ENCODE measurements at regions of chr15 and their contacts with region 1.

Region 1: DNA sequence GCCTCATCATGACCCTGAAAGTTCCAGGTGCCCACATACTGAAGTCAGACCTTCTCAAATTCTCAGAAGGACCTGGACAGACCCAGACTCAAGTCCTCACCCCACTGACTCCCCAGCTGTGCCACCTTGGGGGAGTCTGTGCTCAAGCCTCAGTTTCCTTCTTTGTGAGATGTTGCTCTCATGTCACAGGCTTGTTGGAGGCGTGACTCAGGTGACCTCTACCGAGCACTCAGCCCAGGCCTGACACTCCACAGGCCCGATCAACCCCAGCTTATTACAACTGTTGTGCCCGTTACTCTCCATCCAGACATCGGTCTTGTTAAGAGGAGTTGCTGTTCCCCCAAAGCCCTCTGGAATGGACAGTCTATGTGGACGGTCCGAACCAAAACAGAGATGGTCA is 276.1 kb upstream of the LYSMD4 start:
- DNase-seq: no peak
- H3K4me3 ChIP-seq: no peak overlapping the region
- H3K27ac ChIP-seq: no peak overlapping the region
- H3K4me1 ChIP-seq: no peaks in the 10 kb centered on the region
- H3K27me3 ChIP-seq: no peaks in the 10 kb centered on the region
- CTCF ChIP-seq: no peak

Region 2: GRCh38 chr15:99565299-99566156 is 443.8 kb before region 1 on chr15 and contains the start of gene MEF2A:
- CTCF ChIA-PET with region 1: no interaction called
- POLR2A ChIA-PET with region 1: no interaction called
- intact Hi-C with region 1: no loop called
- DNase-seq: peak; percentile 65 to 90
- H3K4me3 ChIP-seq: peak within 1 kb of the TSS; percentile 72
- H3K27ac ChIP-seq: peak within 1 kb of the TSS; percentile 72
- H3K4me1 ChIP-seq: peaks cover 22% of the 10 kb centered on the region
- H3K27me3 ChIP-seq: no peaks in the 10 kb centered on the region
- CTCF ChIP-seq: no peak
- total RNA-seq, gene MEF2A: 25.7 and 31.8 TPM in 2 replicates

Region 3: DNA sequence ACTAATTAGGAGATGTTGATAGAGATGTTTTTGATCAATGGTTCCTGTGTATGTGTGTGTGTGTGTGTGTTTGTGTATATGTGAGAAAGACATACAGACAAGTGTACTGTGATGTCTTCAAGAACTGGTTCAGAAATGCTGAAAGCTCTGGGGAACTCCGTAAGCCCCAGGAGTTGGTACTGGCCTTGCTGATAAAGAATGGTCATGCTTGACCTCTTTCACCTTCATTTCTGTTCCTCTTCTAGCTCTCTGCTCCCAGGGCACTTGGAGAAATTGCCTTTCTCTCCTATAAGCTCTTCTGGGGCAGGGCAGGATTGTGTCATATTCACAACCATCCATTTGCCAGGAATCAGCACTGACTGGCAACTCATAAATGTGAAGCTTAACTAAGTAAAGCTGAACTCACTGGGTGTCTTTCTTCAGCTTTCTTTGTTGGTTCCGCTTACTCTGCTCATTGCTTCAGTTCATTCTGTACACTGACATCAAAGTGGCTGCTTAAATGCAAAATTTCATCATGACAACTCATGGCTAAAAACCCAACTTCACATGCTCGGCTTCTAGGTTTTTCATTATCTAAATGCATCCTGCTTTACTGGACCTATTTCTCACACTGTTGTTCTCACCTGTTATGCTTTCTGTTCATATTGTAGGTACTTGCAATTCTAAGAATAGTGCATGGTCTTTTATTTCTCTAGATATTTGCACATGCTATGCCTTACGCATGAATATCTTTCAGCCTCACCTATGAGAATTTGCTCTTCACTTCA is 114.0 kb before region 1 on chr15:
- CTCF ChIA-PET with region 1: no interaction called
- POLR2A ChIA-PET with region 1: no interaction called
- intact Hi-C with region 1: no loop called
- DNase-seq: no peak
- H3K4me3 ChIP-seq: no peak overlapping the region
- H3K27ac ChIP-seq: no peak overlapping the region
- H3K4me1 ChIP-seq: no peaks in the 10 kb centered on the region
- H3K27me3 ChIP-seq: peaks cover 15% of the 10 kb centered on the region
- CTCF ChIP-seq: no peak

Region 4: DNA sequence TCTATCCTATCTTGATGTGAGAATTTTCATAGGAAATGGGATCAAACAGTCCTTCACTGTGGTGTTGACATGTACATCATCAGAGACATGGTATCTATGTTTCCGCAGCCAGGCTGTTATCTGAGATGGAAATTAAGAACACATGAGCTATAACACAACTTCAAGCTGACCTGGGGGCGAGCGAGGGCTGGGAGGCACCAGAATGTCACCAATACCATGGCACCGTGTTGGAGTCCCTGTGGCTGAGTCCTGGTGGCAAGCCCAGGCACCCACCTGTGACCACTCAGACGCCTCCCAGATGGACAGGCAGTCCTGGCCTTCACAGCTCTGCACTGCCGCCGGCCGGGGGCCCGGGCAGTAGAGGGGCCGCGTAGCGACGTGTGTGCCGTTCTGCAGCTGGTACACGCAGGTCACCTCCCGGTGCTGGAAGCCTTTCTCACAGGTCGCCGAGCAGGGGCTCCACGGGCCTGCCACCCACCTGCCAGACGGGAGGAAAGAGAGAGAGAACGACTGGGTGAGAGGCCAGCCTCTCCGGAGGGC is 12.2 kb before region 1 on chr15:
- CTCF ChIA-PET with region 1: no interaction called
- POLR2A ChIA-PET with region 1: interaction called, 17 read pairs
- intact Hi-C with region 1: no loop called
- DNase-seq: no peak
- H3K4me3 ChIP-seq: no peak overlapping the region
- H3K27ac ChIP-seq: no peak overlapping the region
- H3K4me1 ChIP-seq: no peaks in the 10 kb centered on the region
- H3K27me3 ChIP-seq: no peaks in the 10 kb centered on the region
- CTCF ChIP-seq: no peak

Region 5: DNA sequence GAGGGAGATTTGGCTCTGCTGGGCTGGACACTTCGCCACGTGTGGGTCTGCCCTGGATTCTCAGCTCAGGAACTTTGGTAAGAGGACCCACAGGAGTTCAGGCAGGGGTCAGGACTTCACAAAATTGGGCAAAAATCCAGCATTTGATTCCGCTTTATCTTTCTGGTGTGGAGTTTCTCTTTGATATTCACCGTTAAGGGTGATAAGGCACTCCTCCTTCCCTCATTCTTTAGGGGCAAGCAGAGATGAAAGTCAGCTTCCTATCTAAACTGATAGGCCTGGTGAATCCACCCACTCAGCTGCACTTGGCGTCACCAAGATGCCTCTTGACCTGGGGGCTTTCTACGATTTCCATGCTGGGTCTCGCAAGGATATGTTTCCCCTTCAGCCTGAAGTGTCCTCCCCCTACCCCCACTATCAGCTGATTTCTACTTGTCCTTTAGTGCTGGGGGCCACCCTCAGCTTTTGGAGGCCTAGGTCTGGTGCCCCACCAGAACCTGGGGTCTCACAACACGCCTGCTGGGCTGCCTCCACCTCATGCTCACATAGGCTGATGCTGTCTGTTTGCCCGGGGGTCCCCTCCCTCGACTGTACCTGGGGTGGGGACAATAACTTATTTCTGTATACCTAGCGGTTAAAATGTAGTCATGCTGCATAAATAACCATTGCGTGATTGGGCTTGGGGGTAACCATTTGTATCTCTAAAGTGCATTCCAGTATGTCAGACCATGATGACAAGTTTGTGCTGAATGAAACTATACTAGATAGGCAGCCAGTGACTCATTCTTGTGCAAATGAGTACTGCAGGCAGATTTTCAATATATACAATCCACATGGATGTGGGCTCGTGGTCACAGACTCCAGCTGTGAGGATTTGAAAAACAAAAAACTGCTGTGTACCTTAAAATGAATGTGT is 84.1 kb after region 1 on chr15:
- CTCF ChIA-PET with region 1: no interaction called
- POLR2A ChIA-PET with region 1: no interaction called
- intact Hi-C with region 1: no loop called
- DNase-seq: peak in 1 of 2 experiments; percentile 63
- H3K4me3 ChIP-seq: no peak overlapping the region
- H3K27ac ChIP-seq: no peak overlapping the region
- H3K4me1 ChIP-seq: no peaks in the 10 kb centered on the region
- H3K27me3 ChIP-seq: no peaks in the 10 kb centered on the region
- CTCF ChIP-seq: no peak

Region 6: DNA sequence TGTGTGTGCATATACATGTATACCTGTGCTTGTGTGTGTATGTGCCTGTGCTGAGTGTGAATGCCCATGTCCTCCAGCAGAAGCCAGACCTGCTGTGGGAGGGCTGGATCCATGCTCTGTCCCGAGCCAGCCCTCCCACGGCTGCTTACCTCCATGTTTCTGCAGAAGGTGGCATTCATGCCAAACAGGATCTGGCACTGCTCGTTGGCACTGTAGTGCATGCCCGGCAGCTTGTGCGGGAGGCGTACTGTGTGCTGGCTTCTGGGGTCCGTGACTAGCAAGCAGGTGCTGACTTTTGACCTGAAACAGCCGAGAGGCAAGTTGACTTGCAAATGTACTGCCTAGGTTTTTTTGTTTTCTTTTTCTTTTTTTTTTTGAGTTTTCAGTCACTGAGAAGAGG is 143.1 kb after region 1 on chr15:
- CTCF ChIA-PET with region 1: no interaction called
- POLR2A ChIA-PET with region 1: no interaction called
- intact Hi-C with region 1: no loop called
- DNase-seq: no peak
- H3K4me3 ChIP-seq: no peak overlapping the region
- H3K27ac ChIP-seq: no peak overlapping the region
- H3K4me1 ChIP-seq: no peaks in the 10 kb centered on the region
- H3K27me3 ChIP-seq: no peaks in the 10 kb centered on the region
- CTCF ChIP-seq: no peak

Measured in PC-9 (cell line).